ENCODE measurements at regions of chr4 and their contacts with region 1.

Region 1: DNA sequence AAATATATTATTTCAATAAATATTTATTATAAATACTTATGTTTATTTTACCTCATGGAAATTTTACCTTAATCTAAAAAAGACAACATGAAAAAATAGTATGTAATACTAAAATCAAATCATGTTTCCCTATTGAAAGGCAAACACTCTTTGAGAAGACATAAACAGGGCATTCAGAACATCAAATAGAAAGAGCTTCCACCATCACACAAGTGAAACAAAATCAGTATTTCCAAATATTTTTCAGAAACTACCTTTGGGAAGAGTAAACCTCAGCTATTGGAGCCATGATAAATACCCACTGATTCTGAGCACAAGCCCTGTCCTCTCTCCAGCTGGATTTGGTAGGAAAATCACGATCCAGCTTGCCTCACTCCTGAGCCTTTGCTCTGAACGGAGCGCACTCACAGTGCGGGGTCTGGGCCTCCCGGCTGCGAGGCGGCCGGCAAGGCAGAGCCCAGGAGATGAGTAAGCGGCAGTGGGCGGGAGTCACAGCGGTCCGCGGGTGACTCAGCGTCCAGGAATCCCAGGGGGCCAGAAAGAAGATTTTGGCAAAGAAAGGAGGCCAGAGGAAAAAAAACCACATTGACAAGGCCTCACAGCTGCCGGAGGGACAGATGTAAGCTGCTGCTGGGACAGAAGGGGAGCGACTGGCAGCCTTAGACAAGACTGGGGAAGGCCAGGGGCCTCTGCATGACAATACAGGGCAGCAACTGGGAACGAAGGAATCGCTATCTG is 14.7 kb upstream of the ANXA5 start:
- DNase-seq: peak; percentile 65 to 74
- ATAC-seq: peak; percentile 100
- H3K4me3 ChIP-seq: peak overlapping the region; percentile 16
- H3K27ac ChIP-seq: peak overlapping the region; percentile 76 to 89
- H3K4me1 ChIP-seq: peaks cover 25% of the 10 kb centered on the region
- CTCF ChIP-seq: no peak
- EP300 ChIP-seq: no peak; a peak in 1 of 5 replicates
- POLR2A ChIP-seq: peak; percentile 42
- RAD21 ChIP-seq: no peak

Region 2: GRCh38 chr4:121668368-121669162 is 42.9 kb before region 1 on chr4:
- CTCF ChIA-PET with region 1: no interaction called
- POLR2A ChIA-PET with region 1: no interaction called
- DNase-seq: no peak
- ATAC-seq: peak; percentile 62 to 80
- H3K4me3 ChIP-seq: no peak overlapping the region
- H3K27ac ChIP-seq: peak overlapping the region in 1 of 2 experiments; percentile 34; a peak in 1 of 6 replicates
- H3K4me1 ChIP-seq: peaks cover 7% of the 10 kb centered on the region
- CTCF ChIP-seq: no peak
- EP300 ChIP-seq: no peak
- POLR2A ChIP-seq: no peak
- RAD21 ChIP-seq: no peak

Region 3: GRCh38 chr4:121690001-121690400 is 21.4 kb before region 1 on chr4:
- CTCF ChIA-PET with region 1: no interaction called
- POLR2A ChIA-PET with region 1: no interaction called
- DNase-seq: no peak
- ATAC-seq: peak in 1 of 2 experiments; percentile 28; a peak in 4 of 6 replicates
- H3K4me3 ChIP-seq: 0 out of 3 replicates have a peak overlapping the region, but pooled peaks have one; percentile 8
- H3K27ac ChIP-seq: peak overlapping the region; percentile 72 to 79
- H3K4me1 ChIP-seq: peaks cover 92% of the 10 kb centered on the region
- CTCF ChIP-seq: no peak
- EP300 ChIP-seq: no peak
- POLR2A ChIP-seq: no peak
- RAD21 ChIP-seq: no peak

Region 4: DNA sequence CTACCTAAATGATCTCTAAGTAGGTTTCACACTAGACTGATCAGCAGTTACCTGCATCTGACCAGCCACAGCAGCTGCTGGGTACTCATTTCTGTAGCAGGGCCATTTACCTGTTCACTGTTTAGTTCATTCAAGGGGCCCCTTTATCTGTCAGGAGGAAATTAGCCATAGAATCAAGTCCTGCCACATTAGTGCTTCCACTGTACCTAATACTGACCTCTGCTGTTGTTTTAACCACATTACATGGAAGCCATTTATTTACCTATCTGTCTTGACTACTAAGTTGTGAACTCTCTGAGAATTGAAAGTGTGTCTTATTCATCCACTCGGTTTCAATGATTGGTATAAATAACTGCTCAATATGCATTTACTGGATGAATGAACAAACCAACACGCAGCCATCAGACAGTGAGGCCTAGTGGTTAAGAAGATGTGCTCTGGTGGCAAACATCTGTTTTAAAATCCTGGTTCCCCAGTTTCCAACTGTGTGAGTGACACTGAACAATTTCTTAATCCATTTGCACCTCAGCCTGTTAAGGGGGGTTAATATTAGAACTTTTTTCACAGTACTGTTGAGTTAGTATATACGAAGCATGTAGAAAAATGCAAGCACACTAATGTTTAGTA is 15.3 kb after region 1 on chr4:
- CTCF ChIA-PET with region 1: interaction called, 14 read pairs
- POLR2A ChIA-PET with region 1: no interaction called
- DNase-seq: peak; percentile 29 to 61
- ATAC-seq: peak; percentile 75 to 83; a peak in 5 of 6 replicates
- H3K4me3 ChIP-seq: no peak overlapping the region
- H3K27ac ChIP-seq: peak overlapping the region in 1 of 2 experiments; percentile 70; a peak in 3 of 6 replicates
- H3K4me1 ChIP-seq: peaks cover 7% of the 10 kb centered on the region; the same call in 2 of the 3 replicates
- CTCF ChIP-seq: peak; percentile 60
- EP300 ChIP-seq: no peak
- POLR2A ChIP-seq: no peak
- RAD21 ChIP-seq: peak; percentile 66 to 73

Region 5: GRCh38 chr4:121749225-121749624 is 37.8 kb after region 1 on chr4:
- CTCF ChIA-PET with region 1: no interaction called
- POLR2A ChIA-PET with region 1: no interaction called
- DNase-seq: no peak
- ATAC-seq: no peak
- H3K4me3 ChIP-seq: no peak overlapping the region
- H3K27ac ChIP-seq: no peak overlapping the region
- H3K4me1 ChIP-seq: no peaks in the 10 kb centered on the region
- CTCF ChIP-seq: no peak
- EP300 ChIP-seq: no peak
- POLR2A ChIP-seq: no peak
- RAD21 ChIP-seq: no peak